HEK293 (cell line): ENCODE measurements at regions of chr4 and their contacts with region 1.

Region 1: DNA sequence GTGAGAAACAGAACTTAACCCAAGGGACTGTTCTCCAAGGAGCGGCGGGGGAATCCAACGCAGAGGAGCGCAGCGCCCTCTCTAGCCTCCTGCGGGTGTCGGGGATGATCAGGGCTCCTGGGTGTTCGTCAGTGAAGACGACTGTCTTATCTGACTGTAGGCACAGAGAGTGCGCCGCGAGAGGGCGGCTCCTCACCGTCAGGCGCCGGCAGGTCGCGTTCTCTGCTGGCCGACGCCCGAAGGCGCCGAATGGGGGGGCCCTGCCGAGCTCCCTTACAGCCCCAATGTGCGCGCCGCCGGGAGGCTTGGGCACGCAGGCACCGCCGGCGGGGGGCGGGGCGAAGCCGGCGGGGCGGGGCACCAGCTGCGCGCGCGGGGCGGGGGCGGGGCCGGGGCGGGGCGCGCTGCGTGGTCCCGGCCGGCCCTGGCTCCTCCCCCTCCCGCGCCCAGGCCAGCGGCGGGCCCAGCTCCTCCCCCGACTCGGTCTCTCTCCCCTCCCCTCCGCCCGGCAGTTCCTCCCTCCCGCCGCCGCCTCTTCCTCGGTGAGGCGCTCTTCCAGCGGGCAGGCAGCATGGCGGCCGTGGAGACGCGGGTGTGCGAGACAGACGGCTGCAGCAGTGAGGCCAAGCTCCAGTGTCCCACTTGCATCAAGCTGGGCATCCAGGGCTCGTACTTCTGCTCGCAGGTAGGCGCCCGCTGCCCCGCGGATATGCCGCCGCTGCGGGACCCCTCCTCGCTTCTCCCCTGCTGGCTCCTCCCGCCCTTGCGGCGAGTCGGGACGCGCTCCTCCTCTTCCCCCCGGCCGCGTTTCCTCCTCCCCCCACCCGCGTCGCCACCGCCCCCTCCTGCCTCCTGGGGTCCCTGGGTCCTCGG is at the start of gene METAP1:
- H3K4me3 ChIP-seq: peak within 1 kb of the TSS; percentile 97
- H3K27ac ChIP-seq: peak within 1 kb of the TSS; percentile 74; the same call in 1 of the 2 replicates
- H3K4me1 ChIP-seq: no peaks in the 10 kb centered on the region
- CTCF ChIP-seq: peak; percentile 93

Region 2: DNA sequence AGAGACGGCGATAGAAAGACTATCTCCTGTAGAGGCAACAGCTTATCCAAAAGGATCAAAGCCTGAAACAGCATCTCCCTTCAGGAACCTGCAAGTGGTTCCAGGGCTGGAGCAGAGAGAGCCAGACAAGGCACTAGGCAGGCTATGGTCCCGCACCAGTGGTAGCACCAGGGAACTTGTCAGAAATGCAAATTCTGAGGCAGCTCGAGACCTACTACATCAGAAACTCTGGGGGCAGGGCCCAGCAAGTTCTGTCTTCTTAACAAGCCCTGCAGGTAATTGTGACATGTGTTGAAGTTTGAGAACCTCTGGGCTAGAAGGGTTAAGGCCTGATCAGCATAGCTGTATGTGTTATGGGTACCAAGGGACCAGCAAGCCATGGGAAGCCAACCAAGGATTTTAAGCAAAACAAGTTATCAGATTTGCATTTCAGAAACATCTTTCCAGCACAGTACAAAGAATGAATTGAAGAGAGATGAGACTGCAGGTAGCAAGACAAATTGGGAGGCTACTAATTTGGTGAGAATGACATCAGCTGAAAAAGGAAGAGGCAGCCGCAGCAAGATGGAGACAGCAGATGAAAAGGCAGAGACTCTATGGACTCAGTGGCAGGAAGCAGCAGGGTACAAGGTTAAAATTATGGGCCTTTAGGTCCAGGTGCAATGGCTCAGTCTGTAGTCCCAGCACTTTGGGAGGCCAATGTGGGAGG is 476.7 kb before region 1 on chr4:
- CTCF ChIA-PET with region 1: no interaction called
- POLR2A ChIA-PET with region 1: no interaction called
- H3K4me3 ChIP-seq: no peak overlapping the region
- H3K27ac ChIP-seq: no peak overlapping the region
- H3K4me1 ChIP-seq: no peaks in the 10 kb centered on the region
- CTCF ChIP-seq: no peak

Region 3: GRCh38 chr4:98928505-98929340 is 66.7 kb before region 1 on chr4 and contains the start of gene EIF4E:
- CTCF ChIA-PET with region 1: interaction called, 3 read pairs
- POLR2A ChIA-PET with region 1: interaction called, 36 read pairs
- H3K4me3 ChIP-seq: peak within 1 kb of the TSS; percentile 98
- H3K27ac ChIP-seq: peak within 1 kb of the TSS; percentile 72
- H3K4me1 ChIP-seq: no peaks in the 10 kb centered on the region
- CTCF ChIP-seq: peak; percentile 82

Region 4: DNA sequence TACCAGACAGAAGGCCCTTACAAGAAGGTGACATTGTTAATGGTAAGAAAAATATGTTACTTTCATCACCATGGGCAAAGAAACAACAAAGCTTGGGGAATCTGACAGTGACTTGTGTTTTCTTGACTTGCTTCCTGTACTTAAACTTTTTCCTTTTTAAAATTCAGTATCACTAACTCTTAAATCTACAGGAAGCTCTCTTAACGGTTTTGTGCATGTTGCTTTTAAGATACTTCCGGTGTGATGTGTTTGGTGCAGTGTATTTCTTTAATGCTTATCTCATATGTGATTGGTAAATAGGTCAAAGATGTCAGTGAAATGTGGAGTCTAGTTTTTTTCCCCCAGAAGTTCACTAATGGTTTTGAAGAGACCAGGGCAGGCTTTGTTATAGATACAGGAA is 47.9 kb after region 1 on chr4:
- CTCF ChIA-PET with region 1: no interaction called
- POLR2A ChIA-PET with region 1: no interaction called
- H3K4me3 ChIP-seq: no peak overlapping the region
- H3K27ac ChIP-seq: no peak overlapping the region
- H3K4me1 ChIP-seq: no peaks in the 10 kb centered on the region
- CTCF ChIP-seq: no peak

Region 5: DNA sequence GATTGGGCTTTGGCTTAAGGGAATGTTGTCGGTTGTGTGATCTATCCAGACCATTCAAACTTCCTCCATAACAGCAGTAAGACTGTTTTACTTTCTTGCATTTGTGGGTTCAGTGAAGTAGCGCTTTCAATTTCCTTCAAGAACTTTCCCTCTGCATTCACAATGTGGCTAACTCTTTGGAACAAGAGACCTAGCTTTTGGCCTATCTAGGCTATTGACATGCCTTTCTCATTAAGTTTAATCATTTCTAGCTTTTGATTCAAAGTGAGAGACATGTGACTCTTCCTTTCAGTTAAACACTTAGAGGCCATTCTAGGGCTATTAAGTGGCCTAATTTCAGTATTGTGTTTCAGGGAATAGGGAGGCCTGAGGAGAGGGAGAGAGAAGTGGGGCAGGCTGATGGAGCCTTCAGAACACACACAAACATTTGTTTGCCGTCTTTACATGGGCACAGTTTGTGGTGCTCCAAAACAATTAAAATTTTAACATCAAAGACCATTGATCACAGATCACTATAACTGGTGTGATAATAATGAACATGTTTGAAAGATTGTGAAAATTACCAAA is 59.1 kb after region 1 on chr4:
- CTCF ChIA-PET with region 1: interaction called, 44 read pairs
- POLR2A ChIA-PET with region 1: interaction called, 11 read pairs
- H3K4me3 ChIP-seq: no peak overlapping the region
- H3K27ac ChIP-seq: no peak overlapping the region
- H3K4me1 ChIP-seq: no peaks in the 10 kb centered on the region
- CTCF ChIP-seq: no peak

Region 6: DNA sequence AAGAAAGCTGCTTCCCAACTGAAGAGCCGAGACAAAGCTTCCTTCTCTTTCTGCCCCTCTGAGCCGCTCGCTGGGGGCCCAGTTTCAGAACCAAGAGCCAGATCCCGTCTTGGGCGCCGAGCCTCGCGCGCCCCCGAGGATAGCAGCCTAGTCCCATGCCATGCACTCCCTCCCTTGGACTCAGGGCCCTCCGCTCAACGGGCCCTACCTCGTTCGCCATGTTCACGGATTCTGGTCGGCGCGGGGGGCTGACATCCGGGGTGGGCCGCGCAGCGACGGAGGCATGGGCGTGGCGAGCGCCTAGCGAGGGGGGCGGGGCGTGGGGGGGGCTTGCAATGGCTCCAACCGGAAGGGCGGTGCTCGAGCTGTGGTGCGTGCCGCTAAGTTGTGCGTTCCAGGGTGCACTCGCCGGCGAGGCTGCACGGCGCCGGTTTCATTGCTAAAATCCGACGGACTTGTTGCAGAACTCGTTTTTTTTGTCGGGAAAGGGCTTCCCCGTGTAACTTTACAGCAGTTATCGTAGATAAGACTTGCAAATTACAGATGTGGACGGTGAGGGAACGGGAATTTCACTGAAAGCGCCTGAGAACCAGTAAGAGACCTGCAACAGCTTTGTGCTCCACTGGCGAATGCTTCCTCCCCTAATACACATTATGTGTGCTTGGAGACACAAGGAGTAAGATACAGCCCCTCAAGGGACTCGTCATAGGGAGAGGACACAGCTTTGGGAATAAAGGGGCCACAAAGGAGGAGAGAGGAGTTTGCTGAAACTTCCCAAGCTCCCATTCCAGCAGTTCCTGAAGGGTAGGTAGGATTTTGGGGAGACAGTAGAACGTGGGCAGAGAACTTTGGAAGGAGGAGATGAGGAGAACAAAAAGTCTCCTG is 93.3 kb after region 1 on chr4 and contains the start of gene ADH5:
- CTCF ChIA-PET with region 1: no interaction called
- POLR2A ChIA-PET with region 1: interaction called, 17 read pairs
- H3K4me3 ChIP-seq: peak within 1 kb of the TSS; percentile 87
- H3K27ac ChIP-seq: peak within 1 kb of the TSS; percentile 42; the same call in 1 of the 2 replicates
- H3K4me1 ChIP-seq: no peaks in the 10 kb centered on the region
- CTCF ChIP-seq: no peak